ENCODE measurements at regions of chr15 and their contacts with region 1.

Region 1: GRCh38 chr15:44682211-44682610 is 18.7 kb upstream of the SPG11 start:
- DNase-seq: no peak
- H3K4me3 Mint-ChIP-seq: peak overlapping the region; percentile 64
- H3K27ac Mint-ChIP-seq: peak overlapping the region; percentile 89
- H3K4me1 Mint-ChIP-seq: peaks cover 87% of the 10 kb centered on the region
- H3K27me3 Mint-ChIP-seq: no peaks in the 10 kb centered on the region

Region 2: DNA sequence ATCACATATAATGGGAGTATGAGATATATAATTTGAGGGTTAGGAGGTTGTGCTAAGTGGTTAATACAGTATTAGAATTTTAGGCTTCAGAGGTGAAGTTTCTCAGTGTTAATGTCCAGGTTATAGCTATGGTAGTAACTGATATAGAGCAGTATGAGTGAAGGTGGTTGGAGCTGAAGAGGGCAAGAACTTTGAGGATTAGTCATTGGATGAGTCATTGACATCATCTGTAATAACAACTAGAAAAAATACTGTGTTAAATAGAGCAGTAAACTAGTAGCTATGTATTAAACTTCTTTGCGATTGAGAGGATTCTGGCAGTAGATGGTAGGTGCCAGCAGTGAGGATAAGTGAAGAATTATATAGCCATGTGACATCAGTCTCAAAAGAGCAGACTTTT is 192.7 kb before region 1 on chr15:
- CTCF ChIA-PET with region 1: no interaction called
- POLR2A ChIA-PET with region 1: no interaction called
- DNase-seq: no peak
- H3K4me3 Mint-ChIP-seq: no peak overlapping the region
- H3K27ac Mint-ChIP-seq: peak overlapping the region; percentile 20
- H3K4me1 Mint-ChIP-seq: peaks cover 25% of the 10 kb centered on the region
- H3K27me3 Mint-ChIP-seq: no peaks in the 10 kb centered on the region

Region 3: GRCh38 chr15:44670491-44670890 is 11.7 kb before region 1 on chr15:
- CTCF ChIA-PET with region 1: interaction called, 85 read pairs
- POLR2A ChIA-PET with region 1: interaction called, 232 read pairs
- DNase-seq: no peak
- H3K4me3 Mint-ChIP-seq: no peak overlapping the region
- H3K27ac Mint-ChIP-seq: peak overlapping the region; percentile 42
- H3K4me1 Mint-ChIP-seq: peaks cover 79% of the 10 kb centered on the region
- H3K27me3 Mint-ChIP-seq: no peaks in the 10 kb centered on the region

Measured in activated CD4-positive, alpha-beta memory T cell treated with anti-CD3 and anti-CD28 coated beads, Interleukin-2, amount 10 ng/mL, durations not matched to agents 7 days and 5 days (primary cell).